H1 (cell line): ENCODE measurements at regions of chr5 and their contacts with region 1.

Region 1: GRCh38 chr5:157670662-157671591 is at the start of gene C5orf52:
- DNase-seq: no peak
- H3K4me3 ChIP-seq: peak within 1 kb of the TSS in 1 of 4 experiments; percentile 64; a peak in 2 of 8 replicates
- H3K27ac ChIP-seq: no peak within 1 kb of the TSS
- H3K4me1 ChIP-seq: no peaks in the 10 kb centered on the region
- H3K27me3 ChIP-seq: no peaks in the 10 kb centered on the region
- CTCF ChIP-seq: no peak
- EP300 ChIP-seq: no peak
- POLR2A ChIP-seq: no peak
- RAD21 ChIP-seq: no peak
- total RNA-seq, gene C5orf52: not detected in 2 replicates

Region 2: DNA sequence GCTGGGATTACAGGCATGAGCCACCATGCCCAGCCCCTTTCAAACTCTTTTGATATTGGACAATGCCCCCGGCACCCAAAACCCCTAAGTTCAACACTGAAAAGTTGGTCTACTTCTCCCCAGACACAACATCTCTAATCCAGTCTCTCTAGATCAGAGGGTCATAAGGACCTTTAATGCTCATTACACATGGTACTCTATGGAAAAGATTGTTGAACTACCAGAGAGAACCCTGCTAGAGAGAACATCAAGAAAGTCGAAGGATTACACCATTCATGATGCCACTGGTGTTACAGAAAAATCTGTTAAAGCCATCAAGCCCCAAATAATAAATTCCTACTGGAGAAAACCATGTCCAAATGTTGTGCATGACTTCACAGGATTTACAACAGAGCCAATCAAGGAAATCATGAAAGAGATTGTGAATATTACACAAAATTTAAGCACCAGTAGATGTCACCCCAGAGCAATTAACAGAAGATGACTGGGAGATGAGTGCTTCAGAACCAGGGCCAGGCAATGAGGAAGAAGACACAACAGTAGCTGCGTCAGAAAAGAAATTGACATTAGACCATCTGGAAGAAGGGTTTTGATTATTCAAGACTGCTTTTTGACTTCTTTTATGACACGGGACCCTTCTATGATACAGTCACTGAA is 239.3 kb before region 1 on chr5:
- CTCF ChIA-PET with region 1: no interaction called
- POLR2A ChIA-PET with region 1: no interaction called
- DNase-seq: no peak
- H3K4me3 ChIP-seq: no peak overlapping the region
- H3K27ac ChIP-seq: no peak overlapping the region
- H3K4me1 ChIP-seq: no peaks in the 10 kb centered on the region
- H3K27me3 ChIP-seq: no peaks in the 10 kb centered on the region
- CTCF ChIP-seq: peak in 2 of 3 experiments; percentile 40 to 50; a peak in 2 of 4 replicates
- EP300 ChIP-seq: no peak
- POLR2A ChIP-seq: no peak
- RAD21 ChIP-seq: peak; percentile 68 to 69

Region 3: DNA sequence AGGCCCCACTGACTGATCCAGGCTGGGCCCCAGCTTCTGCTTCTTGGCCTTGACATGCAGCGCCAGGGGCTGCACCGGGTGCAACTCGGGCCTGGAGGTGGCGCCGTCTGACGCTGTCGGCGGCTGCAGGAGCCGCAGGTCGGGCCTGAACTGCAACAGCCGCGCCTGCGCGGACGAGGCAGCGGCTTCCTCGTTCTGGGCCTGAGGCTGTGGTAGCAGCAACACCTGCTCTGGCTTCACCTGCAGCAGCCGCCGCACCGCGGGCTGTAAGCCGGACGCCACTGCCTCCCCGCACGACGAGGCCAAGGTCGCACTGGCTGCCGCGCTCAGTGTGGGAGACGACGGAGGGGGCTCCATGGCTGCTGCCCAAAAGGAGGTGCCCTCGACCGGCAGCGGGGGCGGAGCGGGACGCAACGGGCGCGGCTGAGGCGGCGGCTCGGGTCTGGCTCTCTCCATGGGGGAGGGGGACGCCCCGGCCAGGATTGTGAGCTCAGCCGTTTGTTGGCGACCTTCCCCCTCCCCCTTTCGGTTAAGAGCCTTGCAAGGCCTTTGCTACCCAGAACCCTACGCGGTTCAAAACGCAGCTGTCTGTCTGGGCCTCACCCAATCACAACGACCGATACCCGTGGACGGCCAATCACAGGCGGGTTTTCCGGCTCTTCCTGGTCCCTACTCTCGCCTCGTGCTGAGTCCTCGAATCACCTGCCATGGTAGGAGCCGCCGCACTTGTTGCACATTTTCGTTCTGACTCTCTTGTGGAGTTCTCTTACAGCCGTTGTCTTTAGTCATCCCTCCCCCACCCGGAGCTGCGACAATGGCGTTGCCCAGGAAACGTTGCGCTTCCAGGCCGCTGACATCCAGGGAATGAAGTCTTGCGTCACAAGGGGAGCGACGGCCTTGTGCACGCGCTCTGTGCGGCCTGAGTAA is 19.0 kb before region 1 on chr5 and contains the start of gene SOX30:
- CTCF ChIA-PET with region 1: interaction called, 14 read pairs
- POLR2A ChIA-PET with region 1: no interaction called
- DNase-seq: peak; percentile 55 to 75
- H3K4me3 ChIP-seq: peak within 1 kb of the TSS; percentile 21 to 52 (median 32); a peak in 6 of 8 replicates
- H3K27ac ChIP-seq: no peak within 1 kb of the TSS
- H3K4me1 ChIP-seq: no peaks in the 10 kb centered on the region
- H3K27me3 ChIP-seq: peaks cover 0 to 7% (median 3%) of the 10 kb centered on the region in 4 experiments; a peak in 6 of 7 replicates
- CTCF ChIP-seq: peak; percentile 53 to 57 (median 56)
- EP300 ChIP-seq: no peak
- POLR2A ChIP-seq: no peak
- RAD21 ChIP-seq: peak; percentile 44 to 60
- total RNA-seq, gene SOX30: not detected in 2 replicates

Region 4: GRCh38 chr5:157697453-157697852 is 26.5 kb after region 1 on chr5:
- CTCF ChIA-PET with region 1: no interaction called
- POLR2A ChIA-PET with region 1: no interaction called
- DNase-seq: no peak
- H3K4me3 ChIP-seq: no peak overlapping the region
- H3K27ac ChIP-seq: no peak overlapping the region
- H3K4me1 ChIP-seq: no peaks in the 10 kb centered on the region
- H3K27me3 ChIP-seq: no peaks in the 10 kb centered on the region
- CTCF ChIP-seq: no peak
- EP300 ChIP-seq: no peak
- POLR2A ChIP-seq: no peak
- RAD21 ChIP-seq: no peak

Region 5: DNA sequence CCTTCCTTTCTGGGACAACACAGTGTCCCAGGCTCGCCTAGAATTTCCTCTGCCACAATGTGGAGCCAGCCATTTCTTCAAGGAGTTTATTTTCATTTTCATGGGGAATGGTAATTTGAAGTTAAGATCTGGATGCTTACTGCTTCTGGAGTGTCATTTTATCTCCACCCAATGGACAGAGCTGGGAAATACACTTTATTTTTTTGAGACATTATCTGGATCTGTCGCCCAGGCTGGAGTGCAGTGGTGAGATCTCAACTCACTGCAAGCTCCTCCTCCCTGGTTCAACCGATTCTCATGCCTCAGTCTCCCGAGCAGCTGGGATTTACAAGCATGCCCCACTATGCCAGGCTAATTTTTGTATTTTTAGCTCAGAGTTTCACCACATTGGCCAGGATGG is 47.6 kb after region 1 on chr5:
- CTCF ChIA-PET with region 1: interaction called, 33 read pairs
- POLR2A ChIA-PET with region 1: no interaction called
- DNase-seq: no peak
- H3K4me3 ChIP-seq: no peak overlapping the region
- H3K27ac ChIP-seq: no peak overlapping the region
- H3K4me1 ChIP-seq: no peaks in the 10 kb centered on the region
- H3K27me3 ChIP-seq: no peaks in the 10 kb centered on the region
- CTCF ChIP-seq: peak in 2 of 3 experiments; percentile 33 to 36; a peak in 3 of 4 replicates
- EP300 ChIP-seq: no peak
- POLR2A ChIP-seq: no peak
- RAD21 ChIP-seq: peak; percentile 68 to 69

Region 6: DNA sequence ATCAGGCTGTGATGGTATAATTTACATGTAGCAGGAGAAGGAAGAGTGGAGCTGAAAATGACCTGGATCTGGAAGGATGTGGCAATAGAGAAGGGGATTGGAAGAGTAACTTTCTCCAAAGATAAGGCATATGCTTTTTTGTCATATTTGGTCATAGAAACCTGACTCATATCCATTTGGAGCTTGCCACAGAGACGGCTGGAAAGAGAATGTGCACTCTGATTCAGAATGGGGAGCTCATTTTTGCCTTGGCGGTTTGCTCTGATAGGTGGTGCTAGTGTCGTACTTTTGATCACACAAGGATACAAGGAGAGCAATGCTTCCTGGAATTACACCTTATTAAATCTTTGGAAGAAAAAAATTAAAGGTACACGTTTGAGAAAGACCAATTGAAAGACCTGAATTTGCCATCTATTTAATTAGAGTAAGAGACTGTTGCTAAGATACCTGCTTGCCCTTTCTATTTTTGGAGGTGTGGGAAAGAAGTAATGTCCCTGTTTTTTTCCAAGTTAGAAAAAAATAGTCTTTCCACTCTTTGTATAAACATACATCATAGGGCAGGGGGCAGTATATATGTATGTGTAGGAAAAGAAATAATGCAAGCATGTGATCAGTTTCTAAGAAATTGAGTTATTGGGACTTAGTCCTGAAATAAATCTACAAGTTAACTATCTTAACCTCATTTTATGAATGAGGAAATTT is 78.0 kb after region 1 on chr5:
- CTCF ChIA-PET with region 1: interaction called, 57 read pairs
- POLR2A ChIA-PET with region 1: interaction called, 3 read pairs
- DNase-seq: no peak
- H3K4me3 ChIP-seq: no peak overlapping the region
- H3K27ac ChIP-seq: no peak overlapping the region
- H3K4me1 ChIP-seq: peaks cover 0 to 4% (median 0%) of the 10 kb centered on the region in 4 experiments; a peak in 2 of 7 replicates
- H3K27me3 ChIP-seq: peaks cover 0 to 13% (median 7%) of the 10 kb centered on the region in 4 experiments; a peak in 5 of 7 replicates
- CTCF ChIP-seq: no peak
- EP300 ChIP-seq: no peak
- POLR2A ChIP-seq: no peak
- RAD21 ChIP-seq: peak in 1 of 2 experiments; percentile 26; a peak in 1 of 4 replicates